Activated CD4-positive, alpha-beta memory T cell treated with anti-CD3 and anti-CD28 coated beads for 36 hours (primary cell): ENCODE measurements at regions of chr3 and their contacts with region 1.

Region 1: DNA sequence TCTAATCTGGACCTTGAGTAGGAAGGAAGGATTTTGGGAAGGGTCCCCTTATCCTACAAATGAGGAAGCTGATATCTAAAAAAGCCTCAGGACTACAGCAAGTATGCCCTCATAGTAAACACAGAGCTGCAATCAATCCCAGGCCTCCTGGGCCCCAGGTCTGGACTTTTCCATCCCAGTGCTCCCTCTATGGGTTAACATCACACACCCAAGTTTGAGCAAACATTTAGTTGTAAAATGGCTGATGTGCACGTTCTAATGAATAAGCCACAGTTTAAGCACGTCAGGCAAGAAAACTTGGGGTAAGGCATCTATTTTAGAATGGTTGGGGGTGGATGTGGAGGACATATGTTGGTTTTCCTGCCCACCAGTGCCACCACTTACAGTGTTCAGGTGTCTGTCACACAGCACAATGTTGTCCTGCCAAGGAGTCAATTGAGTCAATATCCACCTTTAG is 44.3 kb upstream of the UBE2E1 start:
- DNase-seq: peak; percentile 20
- H3K4me3 Mint-ChIP-seq: no peak overlapping the region
- H3K27ac Mint-ChIP-seq: peak overlapping the region; percentile 13
- H3K4me1 Mint-ChIP-seq: peaks cover 21% of the 10 kb centered on the region
- H3K27me3 Mint-ChIP-seq: no peaks in the 10 kb centered on the region

Region 2: GRCh38 chr3:23726811-23727548 is 34.5 kb before region 1 on chr3:
- CTCF ChIA-PET with region 1: no interaction called
- POLR2A ChIA-PET with region 1: no interaction called
- intact Hi-C with region 1: loop called (anchors 1 kb)
- DNase-seq: peak; percentile 24
- H3K4me3 Mint-ChIP-seq: no peak overlapping the region
- H3K27ac Mint-ChIP-seq: no peak overlapping the region
- H3K4me1 Mint-ChIP-seq: peaks cover 8% of the 10 kb centered on the region
- H3K27me3 Mint-ChIP-seq: no peaks in the 10 kb centered on the region

Region 3: DNA sequence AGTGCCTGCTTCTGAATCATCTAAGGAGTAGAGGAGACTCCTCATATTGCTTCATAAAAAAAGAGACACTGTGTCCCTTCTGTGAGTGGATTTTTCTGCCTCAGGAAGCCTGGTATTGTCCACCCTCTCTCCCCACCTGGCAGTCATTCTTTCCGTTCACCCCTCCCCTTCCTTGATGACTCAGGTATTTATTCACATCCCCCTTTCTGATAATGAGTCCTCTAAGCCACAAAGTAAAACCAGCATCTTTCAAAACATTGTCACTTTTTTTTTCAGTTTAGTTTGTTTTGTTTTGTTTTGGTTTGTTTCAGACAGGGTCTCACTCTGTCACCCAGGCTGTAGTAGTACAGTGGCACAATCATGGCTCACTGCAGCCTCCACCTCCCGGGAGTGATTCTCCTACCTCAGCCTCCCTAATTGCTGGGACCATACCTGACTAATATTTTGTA is 20.9 kb before region 1 on chr3:
- CTCF ChIA-PET with region 1: interaction called, 5 read pairs
- POLR2A ChIA-PET with region 1: no interaction called
- intact Hi-C with region 1: loop called (anchors 1 kb)
- DNase-seq: peak; percentile 74
- H3K4me3 Mint-ChIP-seq: no peak overlapping the region
- H3K27ac Mint-ChIP-seq: no peak overlapping the region
- H3K4me1 Mint-ChIP-seq: peaks cover 8% of the 10 kb centered on the region
- H3K27me3 Mint-ChIP-seq: peaks cover 14% of the 10 kb centered on the region

Region 4: DNA sequence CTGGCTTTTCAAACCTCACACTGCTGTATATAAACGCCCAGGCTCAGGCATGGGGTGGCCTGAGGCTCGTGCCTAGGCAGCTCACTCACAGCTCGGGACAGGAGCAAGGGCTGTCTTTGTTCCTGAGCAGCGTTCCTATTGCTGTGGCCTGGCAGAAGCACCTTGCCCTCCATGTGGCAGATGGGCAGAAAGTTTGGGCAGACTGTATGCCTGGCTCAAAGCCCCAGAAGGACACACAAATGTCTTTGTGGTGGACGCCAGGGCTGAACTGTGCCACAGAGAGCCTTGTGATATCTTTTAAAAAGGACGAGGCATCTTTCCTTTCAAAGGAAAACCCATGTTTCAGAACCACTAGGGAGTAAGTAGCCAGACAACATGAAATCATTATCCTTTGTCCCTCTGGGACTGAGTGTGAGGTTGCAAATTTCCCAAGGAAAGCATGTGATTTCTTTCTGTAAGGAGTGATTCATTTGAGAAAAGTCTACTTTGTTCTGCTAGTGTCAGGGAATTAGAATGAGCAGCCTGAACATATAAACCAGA is 15.0 kb after region 1 on chr3:
- CTCF ChIA-PET with region 1: no interaction called
- POLR2A ChIA-PET with region 1: no interaction called
- intact Hi-C with region 1: no loop called
- DNase-seq: no peak
- H3K4me3 Mint-ChIP-seq: no peak overlapping the region
- H3K27ac Mint-ChIP-seq: no peak overlapping the region
- H3K4me1 Mint-ChIP-seq: no peaks in the 10 kb centered on the region
- H3K27me3 Mint-ChIP-seq: peaks cover 9% of the 10 kb centered on the region

Region 5: DNA sequence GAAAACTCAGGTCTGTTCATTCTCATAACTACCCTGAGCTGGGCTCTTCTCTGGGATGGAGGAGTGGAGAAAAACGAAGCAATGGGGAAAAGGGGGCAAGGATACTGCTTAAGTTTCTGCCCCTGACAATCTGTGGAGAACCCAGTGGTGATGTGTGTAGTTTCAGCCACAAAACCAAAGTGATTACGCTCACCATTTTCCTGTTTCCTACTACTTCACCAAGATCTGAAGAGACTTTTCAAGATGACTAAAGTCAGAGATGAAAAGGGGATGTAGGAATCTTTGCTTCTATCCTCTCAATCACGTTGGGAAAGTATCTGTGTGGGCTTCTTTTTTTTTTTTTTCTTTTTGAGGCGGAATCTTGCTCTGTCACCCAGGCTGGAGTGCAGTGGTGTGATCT is 36.0 kb after region 1 on chr3:
- CTCF ChIA-PET with region 1: interaction called, 3 read pairs
- POLR2A ChIA-PET with region 1: interaction called, 4 read pairs
- intact Hi-C with region 1: loop called (anchors 2 kb)
- DNase-seq: peak; percentile 22
- H3K4me3 Mint-ChIP-seq: no peak overlapping the region
- H3K27ac Mint-ChIP-seq: peak overlapping the region; percentile 6
- H3K4me1 Mint-ChIP-seq: peaks cover 15% of the 10 kb centered on the region
- H3K27me3 Mint-ChIP-seq: peaks cover 9% of the 10 kb centered on the region

Region 6: DNA sequence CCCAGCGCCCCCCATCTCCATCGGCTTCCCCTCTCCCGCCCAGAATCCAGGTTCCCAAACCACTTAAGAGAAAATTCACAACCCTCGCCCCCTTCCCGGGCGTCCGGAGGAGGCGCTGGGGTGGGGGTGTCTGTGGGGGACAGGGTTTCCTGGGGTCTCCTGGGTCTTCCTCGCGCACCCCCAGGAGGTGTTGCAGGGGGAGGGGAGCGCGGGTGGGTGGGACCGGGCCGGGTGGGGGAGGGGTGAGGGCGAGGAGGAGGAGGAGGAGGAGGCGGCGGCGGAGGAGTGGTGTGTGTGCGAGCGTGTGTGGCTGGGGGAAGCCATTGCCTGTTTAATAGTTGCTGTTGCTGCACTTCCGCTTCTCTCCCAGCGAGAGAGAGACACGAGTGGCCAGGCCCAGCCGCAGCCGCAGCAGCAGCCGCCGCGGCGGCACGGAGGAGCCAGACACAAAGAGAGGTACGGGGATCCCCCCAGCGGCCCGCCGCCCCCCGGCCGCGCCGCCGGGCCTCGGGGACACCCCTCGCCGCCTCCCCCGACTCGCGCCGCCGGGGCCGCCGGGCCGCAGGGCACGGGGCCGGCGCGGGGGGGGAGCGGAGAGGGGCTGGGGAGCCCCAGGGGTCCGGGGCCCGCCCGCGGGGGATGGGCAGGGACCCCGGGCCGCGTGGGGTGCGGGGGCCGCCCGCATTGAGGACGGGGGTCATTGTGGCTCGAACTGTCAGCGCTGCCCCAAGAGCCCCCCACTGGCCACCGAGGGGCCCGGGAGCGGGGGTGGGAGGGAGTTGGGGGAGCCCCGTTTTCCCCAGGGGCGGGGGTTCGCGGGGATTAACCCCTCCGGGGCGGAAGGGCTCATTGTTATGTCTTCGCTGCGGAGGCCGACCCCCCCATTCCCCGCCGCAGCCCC is 44.4 kb after region 1 on chr3 and contains the start of gene UBE2E1:
- CTCF ChIA-PET with region 1: interaction called, 3 read pairs
- POLR2A ChIA-PET with region 1: no interaction called
- intact Hi-C with region 1: loop called (anchors 2 kb)
- DNase-seq: peak; percentile 73
- H3K4me3 Mint-ChIP-seq: peak within 1 kb of the TSS; percentile 89
- H3K27ac Mint-ChIP-seq: peak within 1 kb of the TSS; percentile 89
- H3K4me1 Mint-ChIP-seq: peaks cover 38% of the 10 kb centered on the region
- H3K27me3 Mint-ChIP-seq: peaks cover 2% of the 10 kb centered on the region
- total RNA-seq, gene UBE2E1: 82.8 to 84.8 TPM